MCF 10A (cell line): ENCODE measurements at regions of chr1 and their contacts with region 1.

Region 1: GRCh38 chr1:93701619-93702018 is 20.0 kb upstream of the BCAR3 start:
- DNase-seq: peak; percentile 99
- H3K4me3 Mint-ChIP-seq: peak overlapping the region; percentile 47
- H3K27ac Mint-ChIP-seq: peak overlapping the region; percentile 95
- H3K4me1 Mint-ChIP-seq: peaks cover 26% of the 10 kb centered on the region
- H3K27me3 Mint-ChIP-seq: no peaks in the 10 kb centered on the region
- CTCF ChIP-seq: no peak

Region 2: GRCh38 chr1:93591676-93592550 is 109.7 kb before region 1 on chr1:
- CTCF ChIA-PET with region 1: no interaction called
- POLR2A ChIA-PET with region 1: no interaction called
- intact Hi-C with region 1: no loop called
- DNase-seq: peak; percentile 46
- H3K4me3 Mint-ChIP-seq: no peak overlapping the region
- H3K27ac Mint-ChIP-seq: peak overlapping the region; percentile 49
- H3K4me1 Mint-ChIP-seq: peaks cover 59% of the 10 kb centered on the region
- H3K27me3 Mint-ChIP-seq: no peaks in the 10 kb centered on the region
- CTCF ChIP-seq: no peak

Region 3: DNA sequence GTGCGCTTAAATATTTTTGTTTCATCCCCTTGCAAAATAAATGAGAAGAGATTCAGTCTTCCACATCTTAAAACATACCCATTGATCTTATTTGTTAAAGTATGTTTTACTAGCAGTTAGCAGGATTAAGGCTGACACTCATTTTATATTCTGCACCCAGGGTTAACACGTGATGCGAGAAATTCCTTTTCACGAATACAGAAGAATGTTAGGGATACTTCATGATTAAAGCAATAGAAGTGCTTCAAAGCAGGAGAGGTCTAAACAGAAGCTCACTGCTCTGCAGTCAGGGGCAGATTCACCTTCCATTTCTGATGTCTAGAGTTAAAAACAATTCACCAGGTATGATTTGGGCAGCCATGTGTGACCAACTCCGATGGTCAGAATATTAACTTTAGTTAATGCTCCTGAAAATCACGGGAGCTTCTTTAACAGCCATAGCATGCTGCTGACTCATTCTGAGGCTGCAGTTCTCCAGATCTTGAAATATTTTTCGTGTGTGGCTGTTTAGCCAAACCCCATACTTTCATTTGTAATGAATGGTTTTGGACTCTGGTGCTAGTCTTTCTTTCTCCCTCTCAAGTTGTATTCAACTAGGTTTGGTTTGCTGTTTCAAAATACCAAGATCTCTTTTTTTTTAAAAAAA is 39.7 kb before region 1 on chr1:
- CTCF ChIA-PET with region 1: no interaction called
- POLR2A ChIA-PET with region 1: interaction called, 11 read pairs
- intact Hi-C with region 1: no loop called
- DNase-seq: peak; percentile 46
- H3K4me3 Mint-ChIP-seq: peak overlapping the region; percentile 43
- H3K27ac Mint-ChIP-seq: peak overlapping the region; percentile 91
- H3K4me1 Mint-ChIP-seq: peaks cover 60% of the 10 kb centered on the region
- H3K27me3 Mint-ChIP-seq: no peaks in the 10 kb centered on the region
- CTCF ChIP-seq: no peak

Region 4: GRCh38 chr1:93672069-93672468 is 29.6 kb before region 1 on chr1:
- CTCF ChIA-PET with region 1: interaction called, 15 read pairs
- POLR2A ChIA-PET with region 1: interaction called, 11 read pairs
- intact Hi-C with region 1: no loop called
- DNase-seq: peak; percentile 89
- H3K4me3 Mint-ChIP-seq: no peak overlapping the region
- H3K27ac Mint-ChIP-seq: peak overlapping the region; percentile 42
- H3K4me1 Mint-ChIP-seq: peaks cover 63% of the 10 kb centered on the region
- H3K27me3 Mint-ChIP-seq: no peaks in the 10 kb centered on the region
- CTCF ChIP-seq: no peak

Region 5: DNA sequence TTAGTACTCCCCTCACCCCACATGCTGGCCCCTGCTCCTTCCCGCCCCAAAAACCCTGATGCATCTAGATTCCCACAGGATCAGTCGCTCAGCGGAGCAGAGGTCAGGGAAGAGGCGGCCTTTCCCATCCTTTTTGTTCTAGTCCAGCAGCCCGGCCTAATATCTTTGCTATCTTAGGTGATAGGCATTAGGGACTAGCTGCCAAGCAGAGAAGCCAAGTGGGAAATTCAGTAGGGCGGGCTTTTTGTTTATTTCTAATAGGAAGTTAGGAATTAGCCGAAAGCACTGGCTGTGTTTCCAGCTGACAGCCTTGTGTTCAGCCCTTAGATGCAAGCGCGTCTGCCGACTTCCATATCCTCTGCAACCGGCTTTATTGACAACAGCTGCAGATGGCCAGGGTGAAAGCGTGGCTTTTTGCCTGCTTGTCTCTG is 39.0 kb after region 1 on chr1:
- CTCF ChIA-PET with region 1: no interaction called
- POLR2A ChIA-PET with region 1: interaction called, 15 read pairs
- intact Hi-C with region 1: no loop called
- DNase-seq: no peak
- H3K4me3 Mint-ChIP-seq: no peak overlapping the region
- H3K27ac Mint-ChIP-seq: no peak overlapping the region
- H3K4me1 Mint-ChIP-seq: peaks cover 42% of the 10 kb centered on the region
- H3K27me3 Mint-ChIP-seq: no peaks in the 10 kb centered on the region
- CTCF ChIP-seq: no peak

Region 6: GRCh38 chr1:93749894-93750301 is 48.3 kb after region 1 on chr1:
- CTCF ChIA-PET with region 1: no interaction called
- POLR2A ChIA-PET with region 1: interaction called, 14 read pairs
- intact Hi-C with region 1: no loop called
- DNase-seq: no peak
- H3K4me3 Mint-ChIP-seq: no peak overlapping the region
- H3K27ac Mint-ChIP-seq: peak overlapping the region; percentile 71
- H3K4me1 Mint-ChIP-seq: peaks cover 56% of the 10 kb centered on the region
- H3K27me3 Mint-ChIP-seq: no peaks in the 10 kb centered on the region
- CTCF ChIP-seq: no peak